ENCODE measurements at regions of chr3 and their contacts with region 1.

Region 1: DNA sequence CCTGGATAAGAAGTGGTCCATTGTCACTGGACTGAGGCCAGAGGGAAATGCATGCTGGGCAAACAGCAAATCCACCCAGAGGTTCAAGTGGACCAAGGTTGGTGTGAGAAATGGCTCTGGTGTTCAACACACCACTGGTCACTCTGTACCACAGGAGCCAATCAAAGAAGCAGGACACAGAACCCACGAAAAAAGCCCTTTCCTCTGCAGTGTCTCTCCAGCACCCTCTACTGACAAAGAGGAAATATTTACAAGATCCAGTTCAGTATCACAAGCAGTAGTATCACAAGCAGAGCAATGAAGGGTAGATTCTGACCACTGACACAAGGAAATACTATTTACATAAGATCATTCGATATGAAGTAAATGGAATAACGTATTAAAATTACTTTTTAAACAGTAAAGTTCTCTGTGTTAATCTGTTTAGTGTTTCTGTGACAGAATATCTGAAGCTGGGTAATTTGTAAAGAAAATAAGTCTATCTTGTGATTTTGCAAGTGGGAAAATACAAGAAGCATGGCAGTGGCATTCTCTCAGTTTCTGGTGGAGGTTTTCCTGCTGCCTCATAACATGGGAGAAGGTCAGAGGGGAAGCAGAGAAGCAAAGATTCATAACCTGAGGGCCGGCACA is 390.7 kb downstream of the EFHB start:
- DNase-seq: peak; percentile 73
- H3K4me3 ChIP-seq: peak overlapping the region; percentile 5
- H3K27ac ChIP-seq: peak overlapping the region; percentile 95
- H3K4me1 ChIP-seq: peaks cover 56% of the 10 kb centered on the region
- CTCF ChIP-seq: peak; percentile 97

Region 2: DNA sequence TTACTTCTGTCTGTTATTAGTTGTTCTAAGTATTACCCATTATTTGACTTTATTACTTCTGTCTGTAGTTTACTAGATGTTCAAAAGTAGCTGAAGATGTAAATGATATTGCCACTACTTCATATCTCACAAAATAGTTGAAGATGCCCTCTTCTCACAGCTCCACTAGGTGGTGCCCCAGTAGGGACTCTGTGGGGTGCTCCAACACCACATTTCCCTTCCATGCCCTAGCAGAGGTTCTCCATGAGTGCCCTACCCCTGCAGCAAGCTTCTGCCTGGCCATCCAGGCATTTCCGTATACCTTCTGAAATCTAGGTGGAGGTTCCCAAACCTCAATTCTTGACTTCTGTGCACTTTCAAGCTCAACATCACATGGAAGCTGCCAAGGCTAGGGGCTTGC is 314.2 kb before region 1 on chr3:
- CTCF ChIA-PET with region 1: no interaction called
- POLR2A ChIA-PET with region 1: no interaction called
- intact Hi-C with region 1: loop called (anchors 5 kb)
- DNase-seq: peak; percentile 16
- H3K4me3 ChIP-seq: no peak overlapping the region
- H3K27ac ChIP-seq: no peak overlapping the region
- H3K4me1 ChIP-seq: peaks cover 10% of the 10 kb centered on the region
- CTCF ChIP-seq: peak; percentile 62

Region 3: GRCh38 chr3:19348929-19349564 is 194.3 kb before region 1 on chr3:
- CTCF ChIA-PET with region 1: interaction called, 34 read pairs
- POLR2A ChIA-PET with region 1: interaction called, 82 read pairs
- intact Hi-C with region 1: loop called (anchors 1 kb)
- DNase-seq: peak; percentile 77
- H3K4me3 ChIP-seq: no peak overlapping the region
- H3K27ac ChIP-seq: peak overlapping the region; percentile 61
- H3K4me1 ChIP-seq: peaks cover 47% of the 10 kb centered on the region
- CTCF ChIP-seq: peak; percentile 93

Region 4: GRCh38 chr3:19526071-19526470 is 17.3 kb before region 1 on chr3:
- CTCF ChIA-PET with region 1: no interaction called
- POLR2A ChIA-PET with region 1: interaction called, 82 read pairs
- intact Hi-C with region 1: no loop called
- DNase-seq: no peak
- H3K4me3 ChIP-seq: no peak overlapping the region
- H3K27ac ChIP-seq: no peak overlapping the region
- H3K4me1 ChIP-seq: peaks cover 1% of the 10 kb centered on the region
- CTCF ChIP-seq: no peak

Region 5: DNA sequence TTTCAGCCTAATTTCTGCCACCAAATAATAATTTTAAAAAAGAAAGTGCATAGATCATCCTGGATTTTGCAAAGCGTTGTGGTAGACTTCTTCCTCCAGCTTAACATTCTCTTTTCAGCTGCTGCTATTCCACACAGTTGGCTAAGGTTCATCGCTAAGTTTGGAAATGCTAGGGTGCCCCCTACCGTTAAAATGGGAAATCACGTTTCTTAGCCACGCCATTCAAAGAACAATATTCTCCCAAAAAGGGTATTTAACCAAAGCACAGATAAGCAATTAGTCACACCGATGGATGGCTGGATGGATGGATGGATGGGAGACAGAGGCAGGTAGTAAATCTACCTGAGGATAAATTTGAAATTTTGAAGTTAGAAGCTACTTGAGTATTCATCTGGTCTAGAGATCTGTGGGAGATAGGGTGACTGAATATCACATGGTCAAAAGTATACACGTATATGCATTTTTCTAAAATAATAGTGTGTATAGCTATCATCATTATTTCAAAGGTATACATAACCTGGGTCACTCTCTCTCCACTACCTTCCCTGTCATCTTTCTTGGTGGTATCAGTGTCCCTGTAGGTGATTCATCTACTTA is 323.5 kb after region 1 on chr3:
- CTCF ChIA-PET with region 1: no interaction called
- POLR2A ChIA-PET with region 1: no interaction called
- intact Hi-C with region 1: loop called (anchors 1 kb)
- DNase-seq: peak; percentile 63
- H3K4me3 ChIP-seq: no peak overlapping the region
- H3K27ac ChIP-seq: no peak overlapping the region
- H3K4me1 ChIP-seq: no peaks in the 10 kb centered on the region
- CTCF ChIP-seq: peak; percentile 94

Region 6: DNA sequence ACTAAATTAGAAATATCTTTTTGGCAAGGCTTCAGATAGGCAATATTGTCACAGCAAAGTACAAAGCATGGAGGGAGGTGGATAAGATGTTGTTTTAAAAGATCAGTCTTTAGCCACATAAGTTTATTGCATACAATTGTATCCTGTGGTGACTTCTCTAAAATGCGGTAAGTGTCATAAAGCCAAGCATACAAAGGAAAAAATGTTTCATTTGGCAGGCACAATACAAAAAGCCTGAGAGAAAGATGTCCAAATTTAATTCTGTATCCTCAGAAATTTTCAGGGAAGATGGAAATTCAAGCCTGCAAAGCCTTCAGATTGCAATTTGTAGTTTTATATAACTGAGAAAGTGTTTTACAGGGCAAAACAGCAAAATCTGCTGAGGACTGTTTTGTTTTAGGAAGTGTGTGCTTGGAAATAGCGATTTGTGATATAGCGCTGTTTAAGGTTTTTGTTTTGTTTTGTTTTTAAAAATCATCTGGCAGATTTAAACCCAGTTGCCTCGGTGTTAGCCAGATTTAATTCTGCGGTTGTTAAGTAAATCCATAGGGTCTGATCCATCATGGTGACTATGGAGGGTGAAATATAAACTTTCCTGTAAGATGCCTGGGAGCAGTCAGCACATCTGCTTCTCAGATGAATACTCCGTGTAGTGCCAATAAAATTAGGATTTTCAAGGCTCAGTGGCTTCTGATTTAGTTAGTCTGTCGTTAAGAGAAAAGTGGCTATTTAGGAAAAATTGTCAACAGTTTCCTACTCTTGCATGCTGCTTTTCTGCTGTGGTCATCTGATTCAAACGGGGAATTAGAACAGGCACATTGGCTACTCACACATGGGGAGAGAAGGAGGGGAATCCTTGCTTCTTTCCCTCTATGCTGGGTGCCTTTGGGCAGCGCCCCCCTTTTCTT is 504.9 kb after region 1 on chr3:
- CTCF ChIA-PET with region 1: no interaction called
- POLR2A ChIA-PET with region 1: no interaction called
- intact Hi-C with region 1: loop called (anchors 5 kb)
- DNase-seq: no peak
- H3K4me3 ChIP-seq: peak overlapping the region; percentile 66
- H3K27ac ChIP-seq: peak overlapping the region; percentile 93
- H3K4me1 ChIP-seq: peaks cover 67% of the 10 kb centered on the region
- CTCF ChIP-seq: no peak